Calu3 (cell line): ENCODE measurements at regions of chr1 and their contacts with region 1.

Region 1: GRCh38 chr1:157193702-157194391 is 55.7 kb upstream of the ETV3 start:
- DNase-seq: peak; percentile 91
- H3K4me3 Mint-ChIP-seq: no peak overlapping the region
- H3K27ac Mint-ChIP-seq: no peak overlapping the region
- H3K4me1 Mint-ChIP-seq: peaks cover 17% of the 10 kb centered on the region
- H3K27me3 Mint-ChIP-seq: peaks cover 45% of the 10 kb centered on the region
- CTCF ChIP-seq: peak; percentile 84

Region 2: DNA sequence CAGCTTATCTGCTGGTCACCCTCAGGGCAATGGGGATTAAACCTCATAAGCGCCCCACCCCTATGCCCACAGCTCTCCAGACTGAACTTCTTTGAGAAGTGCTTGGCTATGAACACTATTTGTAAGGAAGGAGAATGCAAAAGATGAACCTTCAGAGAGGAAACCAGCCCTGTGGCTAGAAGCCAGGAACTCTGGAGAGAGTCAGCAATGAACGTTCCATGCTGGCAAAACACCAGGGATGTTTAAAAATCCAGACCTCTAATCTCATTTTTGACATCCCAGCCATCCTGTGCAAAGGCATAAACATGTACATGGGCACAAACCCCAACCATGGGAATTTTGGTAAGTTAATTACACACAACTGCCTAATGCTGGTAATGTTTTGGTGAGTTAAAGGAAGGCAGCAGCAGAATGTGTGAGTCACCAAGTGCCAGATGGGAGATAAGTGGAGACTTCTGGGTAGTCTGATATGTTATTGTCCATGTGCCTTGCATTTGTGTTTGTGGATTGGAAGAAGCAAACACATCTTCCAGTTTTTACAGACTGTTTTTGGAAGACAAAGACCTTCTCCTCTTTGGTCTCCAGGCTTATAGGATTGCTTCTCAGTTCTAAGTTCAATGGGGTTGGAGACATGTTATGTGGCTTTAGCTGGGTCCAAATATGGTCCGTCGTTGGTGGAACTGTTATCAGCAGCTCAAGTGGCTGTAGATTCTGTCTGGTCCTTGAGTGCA is 118.4 kb after region 1 on chr1:
- CTCF ChIA-PET with region 1: interaction called, 5 read pairs
- intact Hi-C with region 1: loop called (anchors 5 kb)
- DNase-seq: no peak
- H3K4me3 Mint-ChIP-seq: no peak overlapping the region
- H3K27ac Mint-ChIP-seq: no peak overlapping the region
- H3K4me1 Mint-ChIP-seq: peaks cover 7% of the 10 kb centered on the region
- H3K27me3 Mint-ChIP-seq: peaks cover 42% of the 10 kb centered on the region
- CTCF ChIP-seq: no peak

Region 3: DNA sequence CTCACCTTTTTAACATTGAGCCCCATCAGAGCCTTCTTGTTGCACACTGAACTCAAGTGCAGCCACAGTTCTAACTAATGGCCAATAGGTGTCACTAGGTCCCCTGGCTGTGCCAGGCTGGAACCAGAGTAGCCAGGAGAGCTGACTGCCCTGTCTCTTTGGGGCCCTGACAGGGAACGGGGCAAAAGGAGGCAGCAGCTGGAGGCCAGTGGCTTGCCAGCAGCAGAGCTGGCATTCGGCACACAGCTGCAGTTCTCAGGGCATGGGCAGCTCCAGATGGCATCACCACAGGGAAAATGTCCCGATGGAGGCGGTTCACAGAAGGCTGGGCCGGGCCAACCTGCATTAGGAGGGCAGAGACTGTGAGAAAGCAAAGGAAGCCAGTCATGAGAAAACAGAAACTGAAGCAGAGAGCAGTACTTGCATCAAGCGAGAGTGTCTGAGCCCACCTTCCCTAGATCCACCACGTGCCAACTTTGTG is 169.9 kb after region 1 on chr1:
- CTCF ChIA-PET with region 1: no interaction called
- intact Hi-C with region 1: loop called (anchors 5 kb)
- DNase-seq: peak; percentile 65
- H3K4me3 Mint-ChIP-seq: no peak overlapping the region
- H3K27ac Mint-ChIP-seq: no peak overlapping the region
- H3K4me1 Mint-ChIP-seq: no peaks in the 10 kb centered on the region
- H3K27me3 Mint-ChIP-seq: peaks cover 31% of the 10 kb centered on the region
- CTCF ChIP-seq: peak; percentile 57